Adrenal gland (tissue), 19 donors: ENCODE measurements at regions of chr7 and their contacts with region 1.

Region 1: DNA sequence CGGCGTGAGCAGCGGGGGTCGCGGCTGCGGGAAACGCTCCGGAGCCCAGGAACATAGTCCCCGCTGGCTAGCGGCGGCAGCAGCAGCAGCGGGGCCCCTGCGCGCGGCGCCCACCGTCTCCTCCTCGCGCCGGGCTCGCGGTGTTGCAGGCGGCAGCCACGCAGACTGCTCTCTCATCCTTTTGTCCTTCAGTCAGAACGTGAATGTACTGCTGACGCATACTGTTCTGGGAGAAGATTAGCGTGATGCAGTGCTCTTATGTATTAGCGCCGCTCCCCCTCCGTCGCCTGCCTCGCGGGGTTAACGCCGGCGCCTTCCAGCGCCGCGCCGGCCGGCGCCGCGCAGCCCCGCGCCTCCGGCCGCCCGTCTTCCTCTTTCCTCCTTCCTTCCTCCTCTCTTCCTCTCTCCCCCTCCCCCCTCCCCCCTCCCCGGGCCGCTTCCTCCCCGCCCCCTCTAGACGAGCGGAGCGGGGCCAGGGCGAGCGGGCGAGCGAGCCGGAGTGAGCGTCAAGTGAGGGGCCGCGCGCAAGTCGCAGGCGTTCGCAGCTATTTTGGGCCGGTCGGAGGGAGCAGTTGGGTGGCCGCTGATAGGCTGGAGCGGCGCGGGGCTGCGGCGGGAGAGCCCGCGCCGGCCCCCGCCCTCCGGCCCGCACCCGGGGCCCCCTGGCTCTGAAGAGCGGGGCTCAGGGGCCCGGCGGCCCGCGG is 816 bp upstream of the LRRC4 start:
- DNase-seq: peak; percentile 73 to 84 (median 81)
- H3K4me3 ChIP-seq: peak overlapping the region in 2 of 4 donors; percentile 59 to 72
- H3K27ac ChIP-seq: peak overlapping the region in 3 of 5 donors; percentile 72 to 79 (median 76)
- H3K4me1 ChIP-seq: peaks cover 9 to 46% of the 10 kb centered on the region in 2 donors
- H3K27me3 ChIP-seq: no peaks in the 10 kb centered on the region
- CTCF ChIP-seq: peak in 4 of 6 experiments; percentile 16 to 52 (median 28)
- POLR2A ChIP-seq: peak; percentile 71 to 91

Region 2: GRCh38 chr7:127717502-127718339 is 314.3 kb before region 1 on chr7:
- intact Hi-C with region 1: loop called in 1 of 2 experiments (anchors 10 kb)
- DNase-seq: no peak
- H3K4me3 ChIP-seq: no peak overlapping the region
- H3K27ac ChIP-seq: no peak overlapping the region
- H3K4me1 ChIP-seq: no peaks in the 10 kb centered on the region
- H3K27me3 ChIP-seq: no peaks in the 10 kb centered on the region
- CTCF ChIP-seq: no peak
- POLR2A ChIP-seq: no peak

Region 3: DNA sequence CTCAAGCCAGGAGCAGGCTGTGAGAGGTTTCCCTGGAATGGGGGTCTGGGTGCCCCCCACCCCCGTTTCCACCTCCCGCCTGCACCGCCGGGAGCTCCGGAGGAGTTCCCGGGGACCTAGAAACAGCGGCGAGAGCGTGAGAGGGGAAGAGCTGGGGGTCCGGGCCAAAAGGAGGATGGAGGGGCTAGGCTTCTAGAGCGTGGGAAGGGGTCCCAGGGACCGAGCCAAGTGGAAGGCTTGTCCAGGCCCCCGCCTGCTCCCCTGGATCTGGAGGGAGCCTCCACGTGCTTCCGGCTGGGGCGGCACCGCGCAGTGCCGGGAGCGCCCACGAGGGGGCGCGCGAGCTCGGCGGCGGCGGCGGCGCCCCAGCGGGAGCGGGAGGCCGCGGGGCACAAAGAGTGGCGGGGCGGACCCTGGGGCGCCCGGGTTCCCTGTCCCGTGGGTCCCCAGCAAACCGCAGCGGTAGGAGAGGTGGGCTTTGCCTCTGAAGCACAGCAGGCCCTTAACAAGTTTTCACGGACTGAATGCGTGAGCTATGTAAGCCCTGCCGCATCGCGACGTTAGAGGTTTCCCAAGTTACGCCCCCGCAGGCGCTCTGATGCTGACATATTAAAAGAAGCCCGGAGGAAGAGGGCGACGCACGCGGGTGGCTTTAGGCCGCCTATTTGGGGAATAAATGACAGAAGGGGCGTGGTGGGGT is 103.6 kb after region 1 on chr7:
- intact Hi-C with region 1: loop called in 1 of 2 experiments (anchors 10 kb)
- DNase-seq: peak; percentile 25 to 76 (median 56)
- H3K4me3 ChIP-seq: peak overlapping the region in 2 of 4 donors; percentile 25 to 71
- H3K27ac ChIP-seq: no peak overlapping the region
- H3K4me1 ChIP-seq: peaks cover 6 to 12% of the 10 kb centered on the region in 2 donors
- H3K27me3 ChIP-seq: peaks cover 20% of the 10 kb centered on the region
- CTCF ChIP-seq: peak in 5 of 6 experiments; percentile 18 to 99 (median 86)
- POLR2A ChIP-seq: no peak